ENCODE measurements at regions of chr6 and their contacts with region 1.

Region 1: DNA sequence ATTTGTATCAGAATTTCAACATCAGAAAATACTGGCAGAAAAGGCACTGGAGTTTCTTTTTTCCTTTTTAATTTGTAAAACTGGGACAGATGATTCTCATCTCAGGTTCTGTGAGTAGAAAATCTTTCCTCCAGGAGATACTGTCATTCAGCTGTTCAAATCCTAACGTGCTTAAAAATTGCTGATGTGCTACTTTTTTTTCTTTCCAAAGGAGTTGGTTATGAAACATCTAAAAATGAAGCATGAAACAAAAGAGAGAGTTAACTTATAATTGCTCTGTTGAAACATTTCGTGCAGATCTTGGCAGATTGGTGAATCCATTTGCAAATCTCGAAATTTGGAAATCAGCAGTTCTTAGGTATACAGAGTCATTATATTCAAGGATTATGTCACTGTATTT is 622.6 kb downstream of the RNF144B start:
- DNase-seq: no peak
- H3K4me3 ChIP-seq: no peak overlapping the region
- H3K27ac ChIP-seq: no peak overlapping the region
- H3K4me1 ChIP-seq: no peaks in the 10 kb centered on the region
- H3K27me3 ChIP-seq: no peaks in the 10 kb centered on the region
- CTCF ChIP-seq: no peak

Region 2: DNA sequence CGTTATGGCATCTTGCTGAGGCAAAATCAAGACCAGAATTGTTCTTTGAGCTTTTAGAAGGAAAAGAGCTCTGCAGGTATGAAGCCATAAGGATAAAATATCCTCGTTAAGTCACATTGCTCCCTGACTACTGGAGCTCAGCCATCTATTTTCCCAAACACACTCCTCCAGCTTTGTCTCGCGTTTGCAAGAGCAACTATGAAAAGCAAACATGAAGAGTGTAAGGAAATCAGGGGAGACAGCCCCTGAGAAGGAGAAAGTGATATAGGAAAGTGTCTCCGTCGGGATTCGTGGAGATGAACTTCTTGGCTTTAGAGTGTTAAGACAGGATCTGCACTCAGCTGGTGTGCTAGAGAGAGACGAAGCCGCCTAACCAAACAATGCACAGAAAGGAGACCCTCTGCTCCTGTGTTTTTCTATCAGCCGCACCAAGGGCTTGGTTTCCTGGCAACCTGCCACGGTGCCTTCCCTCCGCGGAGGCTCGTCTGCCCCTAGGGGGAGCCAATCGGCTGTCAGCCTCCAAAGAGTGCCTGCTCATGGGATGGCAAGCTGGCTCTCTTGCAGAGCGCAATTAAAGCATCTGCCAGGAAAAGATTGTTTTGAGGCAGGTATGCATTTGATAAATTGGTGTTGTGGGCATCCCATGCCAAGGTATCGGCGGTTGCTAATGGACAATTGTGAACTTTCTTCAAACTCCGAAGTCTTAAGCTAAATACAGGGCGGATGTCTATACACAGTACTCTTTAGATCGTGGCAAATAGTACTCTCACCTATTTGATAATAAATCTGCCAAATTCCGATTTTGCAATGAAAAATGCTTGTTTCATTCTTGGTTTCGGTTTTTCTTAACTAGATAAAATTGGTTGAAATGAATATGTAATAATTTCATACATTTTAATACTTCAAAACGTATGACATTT is 19.4 kb before region 1 on chr6:
- CTCF ChIA-PET with region 1: interaction called, 10 read pairs
- POLR2A ChIA-PET with region 1: no interaction called
- intact Hi-C with region 1: no loop called
- DNase-seq: peak; percentile 90
- H3K4me3 ChIP-seq: no peak overlapping the region
- H3K27ac ChIP-seq: no peak overlapping the region
- H3K4me1 ChIP-seq: peaks cover 6% of the 10 kb centered on the region
- H3K27me3 ChIP-seq: no peaks in the 10 kb centered on the region
- CTCF ChIP-seq: peak; percentile 94

Measured in A673 (cell line).